Mucosa of descending colon (tissue), 3 donors: ENCODE measurements at regions of chr15 and their contacts with region 1.

Region 1: GRCh38 chr15:59492389-59493377 is 54.7 kb downstream of the FAM81A start:
- DNase-seq: peak in 2 of 3 donors; percentile 47 to 81
- ATAC-seq: peak; percentile 98
- H3K4me3 ChIP-seq: no peak overlapping the region
- H3K4me1 ChIP-seq: no peaks in the 10 kb centered on the region
- CTCF ChIP-seq: peak; percentile 63

Region 2: GRCh38 chr15:58805095-58805494 is 687.6 kb before region 1 on chr15:
- intact Hi-C with region 1: no loop called
- DNase-seq: no peak
- ATAC-seq: no peak
- H3K4me3 ChIP-seq: no peak overlapping the region
- H3K4me1 ChIP-seq: no peaks in the 10 kb centered on the region
- CTCF ChIP-seq: no peak

Region 3: DNA sequence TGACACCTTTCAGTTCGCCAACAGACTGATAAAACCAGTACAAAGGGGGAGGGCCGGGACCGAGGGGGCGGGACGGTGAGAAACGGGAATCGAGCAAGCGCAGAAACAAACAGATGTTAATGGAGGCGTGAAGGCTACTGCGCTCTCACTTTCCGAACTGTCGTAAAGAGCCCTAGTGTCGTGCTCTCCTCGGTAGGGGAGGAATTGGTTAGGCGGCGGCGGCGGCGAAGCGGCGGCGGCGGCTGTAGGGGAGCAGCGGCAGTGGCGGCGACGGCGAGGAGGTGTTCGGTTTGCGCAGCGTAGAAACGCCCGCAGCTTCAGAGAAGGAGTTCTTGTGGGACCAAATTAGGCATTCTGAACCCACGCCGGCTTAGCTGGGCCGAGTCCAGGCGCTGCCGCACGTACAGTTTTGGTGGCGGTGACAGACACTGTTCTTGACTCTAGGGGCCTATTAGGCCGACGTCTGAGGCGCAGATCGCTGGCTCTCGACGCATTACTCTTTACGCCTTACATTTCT is 505.1 kb before region 1 on chr15 and contains the start of gene RNF111:
- intact Hi-C with region 1: loop called in 1 of 2 experiments (anchors 10 kb)
- DNase-seq: peak; percentile 91 to 96 (median 92)
- ATAC-seq: peak; percentile 99
- H3K4me3 ChIP-seq: peak within 1 kb of the TSS; percentile 78
- H3K4me1 ChIP-seq: peaks cover 11% of the 10 kb centered on the region
- CTCF ChIP-seq: no peak
- total RNA-seq, gene RNF111: 25.7 to 39.6 (median 37.8) TPM

Region 4: GRCh38 chr15:59174835-59175831 is 317.6 kb before region 1 on chr15:
- intact Hi-C with region 1: loop called in 1 of 2 experiments (anchors 10 kb)
- DNase-seq: peak in 2 of 3 donors; percentile 74 to 83
- ATAC-seq: peak; percentile 96
- H3K4me3 ChIP-seq: no peak overlapping the region
- H3K4me1 ChIP-seq: peaks cover 9% of the 10 kb centered on the region
- CTCF ChIP-seq: peak; percentile 10

Region 5: GRCh38 chr15:59622289-59622688 is 129.6 kb after region 1 on chr15:
- intact Hi-C with region 1: no loop called
- DNase-seq: peak; percentile 74 to 85 (median 80)
- ATAC-seq: peak; percentile 92
- H3K4me3 ChIP-seq: no peak overlapping the region
- H3K4me1 ChIP-seq: peaks cover 4% of the 10 kb centered on the region
- CTCF ChIP-seq: peak; percentile 25

Region 6: GRCh38 chr15:59678620-59679019 is 185.9 kb after region 1 on chr15:
- intact Hi-C with region 1: no loop called
- DNase-seq: no peak
- ATAC-seq: no peak
- H3K4me3 ChIP-seq: no peak overlapping the region
- H3K4me1 ChIP-seq: no peaks in the 10 kb centered on the region
- CTCF ChIP-seq: no peak